Body of pancreas (tissue), 4 donors: ENCODE measurements at regions of chr18 and their contacts with region 1.

Region 1: DNA sequence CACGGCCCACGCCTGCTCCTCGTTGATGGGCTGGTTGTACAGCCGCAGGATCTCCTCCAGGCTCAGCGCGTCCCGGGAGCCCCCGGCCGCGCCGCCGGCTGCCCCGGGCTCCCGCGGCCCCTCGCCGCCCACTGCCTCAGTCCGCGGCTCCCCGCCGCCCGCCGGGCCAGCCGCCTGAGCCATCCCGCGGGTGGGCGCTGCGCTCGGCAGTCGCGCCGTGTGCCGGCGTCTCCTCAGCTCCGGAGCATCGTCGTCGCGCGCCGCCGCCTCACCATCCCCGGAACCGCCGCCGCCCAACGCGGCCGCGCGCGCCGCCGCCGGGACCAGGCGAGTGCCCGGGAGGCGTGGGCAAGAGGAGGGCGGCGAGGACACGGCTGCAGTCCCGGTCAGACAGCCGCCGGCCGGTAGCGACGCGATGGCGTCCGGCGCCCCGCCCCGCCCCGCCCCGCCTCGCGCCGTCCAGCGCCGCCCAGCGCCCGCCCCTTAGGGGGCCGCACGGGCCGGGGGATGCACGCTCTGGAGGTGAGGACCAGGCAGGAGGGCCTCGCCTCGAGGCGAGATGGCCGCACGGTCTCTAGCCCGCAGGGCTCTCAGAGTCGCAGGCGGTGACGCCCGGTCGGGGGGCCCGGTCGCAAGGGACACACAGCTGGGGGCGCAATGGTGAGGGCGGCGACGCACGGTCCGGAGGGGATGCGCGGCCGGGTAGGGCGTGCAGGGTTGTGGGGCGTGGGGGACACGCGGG is at the start of gene SPIRE1:
- DNase-seq: peak; percentile 67 to 81 (median 80)
- ATAC-seq: peak; percentile 82
- H3K4me3 ChIP-seq: peak within 1 kb of the TSS; percentile 72 to 78
- H3K27ac ChIP-seq: peak within 1 kb of the TSS; percentile 71 to 89 (median 86)
- H3K4me1 ChIP-seq: peaks cover 11% of the 10 kb centered on the region
- H3K27me3 ChIP-seq: no peaks in the 10 kb centered on the region
- CTCF ChIP-seq: no peak
- POLR2A ChIP-seq: peak; percentile 57 to 65 (median 57)
- total RNA-seq, gene SPIRE1: 8.2 to 15.0 TPM

Region 2: GRCh38 chr18:12092398-12093229 is 565.2 kb before region 1 on chr18:
- intact Hi-C with region 1: no loop called
- DNase-seq: peak; percentile 82 to 88 (median 83)
- ATAC-seq: peak; percentile 85
- H3K4me3 ChIP-seq: no peak overlapping the region
- H3K27ac ChIP-seq: peak overlapping the region; percentile 55 to 67 (median 62)
- H3K4me1 ChIP-seq: peaks cover 46% of the 10 kb centered on the region
- H3K27me3 ChIP-seq: no peaks in the 10 kb centered on the region
- CTCF ChIP-seq: peak in 6 of 7 experiments; percentile 48 to 84 (median 68)
- POLR2A ChIP-seq: no peak

Region 3: DNA sequence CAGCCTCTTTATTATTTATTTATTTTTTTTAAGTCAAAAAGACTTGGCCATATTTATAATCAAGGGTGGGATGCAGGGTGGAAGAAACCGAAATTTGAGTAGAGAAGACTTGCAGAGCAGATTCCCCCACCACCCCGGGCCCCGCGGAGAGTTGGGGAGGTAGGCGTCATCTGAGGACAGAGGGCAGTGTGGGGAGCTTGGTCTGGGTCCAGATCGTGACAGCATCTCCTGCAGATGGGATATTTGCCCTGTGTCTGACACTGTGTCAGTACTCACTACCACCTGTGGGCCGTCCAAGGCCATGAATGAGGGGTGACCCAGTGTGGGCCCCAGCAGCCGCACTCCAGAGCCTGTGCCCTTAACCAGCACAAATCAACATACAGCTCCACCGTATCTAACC is 260.6 kb before region 1 on chr18:
- intact Hi-C with region 1: loop called (anchors 5 kb)
- DNase-seq: no peak
- ATAC-seq: no peak
- H3K4me3 ChIP-seq: no peak overlapping the region
- H3K27ac ChIP-seq: no peak overlapping the region
- H3K4me1 ChIP-seq: no peaks in the 10 kb centered on the region
- H3K27me3 ChIP-seq: no peaks in the 10 kb centered on the region
- CTCF ChIP-seq: no peak
- POLR2A ChIP-seq: no peak

Region 4: DNA sequence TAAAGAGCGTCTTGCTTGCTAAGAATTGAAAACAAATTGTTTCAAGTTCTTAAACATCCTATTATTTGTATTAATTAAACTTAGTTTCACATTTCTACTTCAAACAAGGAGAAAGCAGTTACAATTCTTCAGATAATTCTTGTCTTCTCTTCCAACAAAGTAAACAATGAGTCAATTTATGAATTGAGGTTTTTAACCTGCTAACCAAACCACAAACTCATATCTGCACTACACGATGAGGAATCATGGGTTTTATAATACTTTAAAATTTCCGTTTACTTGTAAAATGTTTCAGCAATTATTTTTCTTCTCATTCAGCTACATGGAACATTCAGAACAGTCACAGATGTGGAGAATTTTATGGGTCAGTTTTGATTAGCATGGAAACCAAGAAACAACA is 114.2 kb before region 1 on chr18:
- intact Hi-C with region 1: loop called (anchors 5 kb)
- DNase-seq: no peak
- ATAC-seq: no peak
- H3K4me3 ChIP-seq: no peak overlapping the region
- H3K27ac ChIP-seq: no peak overlapping the region
- H3K4me1 ChIP-seq: no peaks in the 10 kb centered on the region
- H3K27me3 ChIP-seq: no peaks in the 10 kb centered on the region
- CTCF ChIP-seq: no peak
- POLR2A ChIP-seq: no peak